ENCODE measurements at regions of chr9 and their contacts with region 1.

Region 1: GRCh38 chr9:113657703-113658544 is 194.4 kb downstream of the RGS3 start:
- DNase-seq: peak; percentile 86
- ATAC-seq: peak; percentile 93
- H3K4me3 ChIP-seq: no peak overlapping the region
- H3K4me3 Mint-ChIP-seq: no peak overlapping the region
- H3K27ac ChIP-seq: no peak overlapping the region
- H3K27ac Mint-ChIP-seq: peak overlapping the region; percentile 71
- H3K4me1 ChIP-seq: no peaks in the 10 kb centered on the region
- H3K4me1 Mint-ChIP-seq: no peaks in the 10 kb centered on the region
- H3K27me3 ChIP-seq: peaks cover 0 to 17% (median 7%) of the 10 kb centered on the region in 4 experiments
- H3K27me3 Mint-ChIP-seq: peaks cover 34% of the 10 kb centered on the region
- CTCF ChIP-seq: peak; percentile 92

Region 2: GRCh38 chr9:112844771-112845542 is 813.0 kb before region 1 on chr9:
- CTCF ChIA-PET with region 1: interaction called, 4 read pairs
- POLR2A ChIA-PET with region 1: no interaction called
- intact Hi-C with region 1: loop called (anchors 10 kb)
- DNase-seq: peak; percentile 76
- ATAC-seq: peak; percentile 63
- H3K4me3 ChIP-seq: no peak overlapping the region
- H3K4me3 Mint-ChIP-seq: no peak overlapping the region
- H3K27ac ChIP-seq: no peak overlapping the region
- H3K27ac Mint-ChIP-seq: no peak overlapping the region
- H3K4me1 ChIP-seq: peaks cover 7 to 8% of the 10 kb centered on the region in 2 donors
- H3K4me1 Mint-ChIP-seq: peaks cover 14% of the 10 kb centered on the region
- H3K27me3 ChIP-seq: no peaks in the 10 kb centered on the region
- H3K27me3 Mint-ChIP-seq: no peaks in the 10 kb centered on the region
- CTCF ChIP-seq: peak; percentile 100

Region 3: DNA sequence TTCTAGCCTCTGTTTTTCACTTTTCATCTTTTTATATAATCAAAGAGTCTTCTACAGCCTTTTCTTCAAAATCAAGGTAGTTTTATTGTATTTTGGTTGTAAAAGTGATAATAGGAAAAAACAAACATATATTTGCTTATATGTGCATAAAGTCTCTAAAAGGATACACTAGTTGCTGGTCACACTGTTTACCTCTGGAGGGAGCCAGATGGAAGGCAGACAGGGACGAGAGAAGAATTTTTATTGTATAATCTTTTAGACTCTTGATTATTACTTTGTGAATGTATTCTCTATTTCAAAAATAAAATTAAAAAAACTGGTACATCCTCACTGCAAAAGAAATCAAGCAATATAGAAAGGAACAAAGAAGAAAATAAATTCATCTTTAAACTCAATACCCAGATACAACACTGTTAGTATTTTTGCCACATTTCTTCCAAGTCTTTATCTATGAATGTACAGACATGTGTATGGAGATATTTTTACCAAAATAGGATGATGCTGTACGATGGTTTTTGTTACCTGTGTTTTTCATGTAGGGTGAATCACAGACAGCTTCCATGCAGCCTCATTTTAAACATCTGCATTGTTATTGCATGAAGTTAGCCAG is 348.6 kb before region 1 on chr9:
- CTCF ChIA-PET with region 1: interaction called, 21 read pairs
- POLR2A ChIA-PET with region 1: no interaction called
- intact Hi-C with region 1: no loop called
- DNase-seq: peak; percentile 39
- ATAC-seq: no peak
- H3K4me3 ChIP-seq: no peak overlapping the region
- H3K4me3 Mint-ChIP-seq: no peak overlapping the region
- H3K27ac ChIP-seq: no peak overlapping the region
- H3K27ac Mint-ChIP-seq: no peak overlapping the region
- H3K4me1 ChIP-seq: no peaks in the 10 kb centered on the region
- H3K4me1 Mint-ChIP-seq: no peaks in the 10 kb centered on the region
- H3K27me3 ChIP-seq: no peaks in the 10 kb centered on the region
- H3K27me3 Mint-ChIP-seq: peaks cover 4% of the 10 kb centered on the region
- CTCF ChIP-seq: peak; percentile 67

Region 4: DNA sequence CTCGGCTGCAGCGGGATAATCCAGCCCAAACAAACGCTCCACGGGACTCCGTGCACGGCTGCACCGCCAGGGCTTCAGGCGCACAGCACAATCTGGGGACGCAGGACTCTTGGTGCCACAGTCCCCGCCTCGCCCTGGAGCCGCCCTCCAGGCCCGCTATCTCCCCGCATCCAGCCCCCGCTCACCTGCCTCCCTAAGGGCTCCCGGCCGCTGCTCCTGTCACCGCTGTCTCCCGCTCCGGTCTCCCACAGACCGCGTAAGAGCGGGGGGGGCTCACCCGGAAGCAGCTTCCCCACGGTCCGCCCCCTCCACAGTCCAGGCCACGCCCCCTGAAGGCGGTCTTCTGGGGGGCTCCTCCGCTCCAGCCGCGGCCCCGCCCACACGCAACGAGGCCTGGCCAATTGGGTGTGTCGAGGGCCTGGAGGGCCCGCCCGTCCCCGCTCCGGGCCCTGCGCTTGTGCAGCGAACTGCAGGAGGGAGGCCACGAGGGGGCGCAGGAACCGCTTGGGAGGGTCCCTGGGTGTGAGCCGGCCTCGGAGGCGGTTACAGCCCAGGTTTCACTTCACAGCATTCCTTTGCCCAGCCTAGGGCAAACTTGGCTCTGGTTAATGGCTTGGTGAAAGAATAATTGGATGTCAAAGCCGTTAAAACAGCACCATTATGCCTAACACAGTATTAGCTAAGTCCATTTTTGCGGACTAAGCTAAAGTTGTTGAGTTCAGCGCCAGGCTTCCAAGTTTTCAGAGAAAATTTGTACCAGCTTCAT is 256.7 kb before region 1 on chr9 and contains the start of gene ALAD:
- CTCF ChIA-PET with region 1: interaction called, 19 read pairs
- POLR2A ChIA-PET with region 1: interaction called, 4 read pairs
- intact Hi-C with region 1: no loop called
- DNase-seq: peak; percentile 99
- ATAC-seq: peak; percentile 99
- H3K4me3 ChIP-seq: peak within 1 kb of the TSS; percentile 60 to 98 (median 82)
- H3K4me3 Mint-ChIP-seq: peak within 1 kb of the TSS; percentile 98
- H3K27ac ChIP-seq: peak within 1 kb of the TSS; percentile 18 to 73
- H3K27ac Mint-ChIP-seq: peak within 1 kb of the TSS; percentile 93
- H3K4me1 ChIP-seq: peaks cover 10 to 18% of the 10 kb centered on the region in 2 donors
- H3K4me1 Mint-ChIP-seq: peaks cover 28% of the 10 kb centered on the region
- H3K27me3 ChIP-seq: no peaks in the 10 kb centered on the region
- H3K27me3 Mint-ChIP-seq: no peaks in the 10 kb centered on the region
- CTCF ChIP-seq: peak; percentile 93
- total RNA-seq, gene ALAD: 39.8 and 40.1 TPM in 2 replicates

Region 5: GRCh38 chr9:113454914-113455761 is 202.8 kb before region 1 on chr9:
- CTCF ChIA-PET with region 1: interaction called, 311 read pairs
- POLR2A ChIA-PET with region 1: no interaction called
- intact Hi-C with region 1: no loop called
- DNase-seq: no peak
- ATAC-seq: no peak
- H3K4me3 ChIP-seq: no peak overlapping the region
- H3K4me3 Mint-ChIP-seq: no peak overlapping the region
- H3K27ac ChIP-seq: no peak overlapping the region
- H3K27ac Mint-ChIP-seq: no peak overlapping the region
- H3K4me1 ChIP-seq: no peaks in the 10 kb centered on the region
- H3K4me1 Mint-ChIP-seq: no peaks in the 10 kb centered on the region
- H3K27me3 ChIP-seq: no peaks in the 10 kb centered on the region
- H3K27me3 Mint-ChIP-seq: no peaks in the 10 kb centered on the region
- CTCF ChIP-seq: no peak

Region 6: DNA sequence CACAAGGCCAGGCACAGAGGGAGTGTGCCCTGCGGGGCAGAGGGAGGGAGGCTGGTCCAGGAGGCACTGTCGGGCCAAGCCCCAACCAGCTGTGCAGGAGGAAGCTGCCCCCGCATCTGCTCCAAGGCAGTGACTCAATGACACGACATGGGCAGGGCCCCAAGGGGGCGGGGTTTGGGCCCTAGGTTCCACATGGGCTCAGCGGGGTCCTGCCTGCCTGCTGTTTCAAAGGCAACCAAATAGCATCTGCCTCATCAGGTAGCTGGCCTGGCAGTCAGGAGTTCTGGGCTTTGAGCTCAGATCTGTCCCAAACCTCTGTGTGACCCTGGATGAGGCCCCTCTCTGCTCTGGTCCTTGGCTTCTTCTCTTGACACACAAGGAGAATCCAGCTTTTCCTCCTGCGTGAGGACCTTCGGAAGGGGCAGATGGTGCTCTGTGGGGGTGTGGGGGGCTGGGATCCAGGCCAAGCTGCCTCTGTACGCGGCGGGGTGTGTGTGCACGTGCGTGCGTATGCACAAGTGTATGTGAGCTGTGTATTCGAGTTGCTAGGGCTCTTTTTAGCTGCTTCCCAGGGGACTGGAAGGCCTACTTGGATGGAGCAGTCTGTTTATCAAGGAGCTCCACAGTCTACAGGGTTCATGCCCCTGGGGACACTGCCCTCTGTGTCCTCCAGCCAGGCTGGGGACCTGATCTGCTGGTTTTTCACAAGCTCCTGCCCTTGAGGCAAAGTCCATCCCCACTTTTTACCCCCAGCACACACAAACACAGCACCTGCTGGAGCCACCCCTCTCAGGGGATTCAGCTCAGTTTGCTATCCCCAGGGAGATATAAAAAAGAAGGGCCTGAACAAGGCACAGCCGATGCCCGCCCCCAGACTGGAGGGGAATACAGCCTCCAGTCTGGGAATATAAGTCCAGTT is 55.5 kb before region 1 on chr9:
- CTCF ChIA-PET with region 1: interaction called, 27 read pairs
- POLR2A ChIA-PET with region 1: no interaction called
- intact Hi-C with region 1: no loop called
- DNase-seq: peak; percentile 38
- ATAC-seq: peak; percentile 74
- H3K4me3 ChIP-seq: no peak overlapping the region
- H3K4me3 Mint-ChIP-seq: no peak overlapping the region
- H3K27ac ChIP-seq: no peak overlapping the region
- H3K27ac Mint-ChIP-seq: no peak overlapping the region
- H3K4me1 ChIP-seq: peaks cover 0 to 15% of the 10 kb centered on the region in 2 donors
- H3K4me1 Mint-ChIP-seq: peaks cover 19% of the 10 kb centered on the region
- H3K27me3 ChIP-seq: peaks cover 0 to 4% (median 0%) of the 10 kb centered on the region in 4 experiments
- H3K27me3 Mint-ChIP-seq: no peaks in the 10 kb centered on the region
- CTCF ChIP-seq: no peak

Region 7: GRCh38 chr9:113992276-113992951 is 334.5 kb after region 1 on chr9:
- CTCF ChIA-PET with region 1: no interaction called
- POLR2A ChIA-PET with region 1: no interaction called
- intact Hi-C with region 1: no loop called
- DNase-seq: no peak
- ATAC-seq: no peak
- H3K4me3 ChIP-seq: peak overlapping the region in 2 of 5 experiments; percentile 17 to 29
- H3K4me3 Mint-ChIP-seq: peak overlapping the region; percentile 46
- H3K27ac ChIP-seq: no peak overlapping the region
- H3K27ac Mint-ChIP-seq: no peak overlapping the region
- H3K4me1 ChIP-seq: peaks cover 25 to 27% of the 10 kb centered on the region in 2 donors
- H3K4me1 Mint-ChIP-seq: peaks cover 23% of the 10 kb centered on the region
- H3K27me3 ChIP-seq: no peaks in the 10 kb centered on the region
- H3K27me3 Mint-ChIP-seq: no peaks in the 10 kb centered on the region
- CTCF ChIP-seq: no peak

Measured in B cell (primary cell).